ENCODE measurements at regions of chrX and their contacts with region 1.

Region 1: GRCh38 chrX:68196939-68197791 is 236.1 kb downstream of the OPHN1 start:
- DNase-seq: peak; percentile 73
- H3K4me3 Mint-ChIP-seq: no peak overlapping the region
- H3K27ac Mint-ChIP-seq: no peak overlapping the region
- H3K4me1 Mint-ChIP-seq: no peaks in the 10 kb centered on the region
- H3K27me3 Mint-ChIP-seq: peaks cover 22% of the 10 kb centered on the region
- CTCF ChIP-seq: peak; percentile 69

Region 2: DNA sequence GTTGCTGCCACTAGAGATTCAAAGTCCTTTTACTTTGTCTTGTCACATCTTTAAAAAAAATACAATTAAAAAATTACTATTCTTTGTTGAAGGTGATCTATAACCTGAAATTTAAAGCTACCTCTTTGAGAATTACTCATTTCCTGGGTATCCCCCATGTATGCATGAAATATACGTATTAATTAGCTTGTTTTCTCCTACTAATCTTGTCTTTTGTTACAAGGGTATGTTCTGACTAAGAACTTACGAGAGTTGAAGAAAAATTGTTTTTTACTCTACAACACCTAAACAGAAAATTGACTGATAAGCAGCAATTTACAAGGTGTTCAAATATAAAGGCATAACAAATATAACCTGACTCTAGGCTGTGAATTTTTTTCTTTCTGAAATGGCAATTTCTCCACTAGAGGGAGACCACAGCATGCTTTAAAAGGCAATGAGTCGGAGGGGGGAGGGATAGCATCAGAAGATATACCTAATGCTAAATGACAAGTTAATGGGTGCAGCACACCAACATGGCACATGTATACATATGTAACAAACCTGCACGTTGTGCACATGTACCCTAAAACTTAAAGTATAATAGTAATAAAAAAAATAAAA is 13.5 kb before region 1 on chrX:
- CTCF ChIA-PET with region 1: interaction called, 33 read pairs
- POLR2A ChIA-PET with region 1: no interaction called
- intact Hi-C with region 1: no loop called
- DNase-seq: peak; percentile 53
- H3K4me3 Mint-ChIP-seq: no peak overlapping the region
- H3K27ac Mint-ChIP-seq: no peak overlapping the region
- H3K4me1 Mint-ChIP-seq: no peaks in the 10 kb centered on the region
- H3K27me3 Mint-ChIP-seq: peaks cover 22% of the 10 kb centered on the region
- CTCF ChIP-seq: peak; percentile 51

Region 3: DNA sequence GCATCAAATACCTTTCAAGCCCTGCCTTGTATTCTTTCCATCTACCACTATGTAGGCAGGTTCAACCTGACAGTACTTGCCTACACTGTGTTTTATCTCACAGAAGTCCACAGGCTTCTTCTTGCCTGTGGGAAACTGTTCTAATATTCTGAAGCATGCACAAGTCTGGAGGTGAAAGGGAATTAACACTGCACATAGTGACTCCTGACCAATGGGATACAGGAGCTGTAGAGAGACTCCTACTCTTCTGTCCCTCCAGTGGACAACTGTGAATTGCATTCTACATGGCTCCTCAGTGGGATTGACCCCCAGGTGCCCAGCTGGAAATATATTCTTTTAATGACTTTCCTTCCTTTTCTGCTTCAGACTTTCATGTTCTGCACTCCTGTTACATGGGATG is 293.4 kb after region 1 on chrX:
- CTCF ChIA-PET with region 1: interaction called, 19 read pairs
- POLR2A ChIA-PET with region 1: interaction called, 4 read pairs
- intact Hi-C with region 1: loop called (anchors 1 kb)
- DNase-seq: peak; percentile 41
- H3K4me3 Mint-ChIP-seq: no peak overlapping the region
- H3K27ac Mint-ChIP-seq: no peak overlapping the region
- H3K4me1 Mint-ChIP-seq: no peaks in the 10 kb centered on the region
- H3K27me3 Mint-ChIP-seq: peaks cover 28% of the 10 kb centered on the region
- CTCF ChIP-seq: peak; percentile 25

Region 4: DNA sequence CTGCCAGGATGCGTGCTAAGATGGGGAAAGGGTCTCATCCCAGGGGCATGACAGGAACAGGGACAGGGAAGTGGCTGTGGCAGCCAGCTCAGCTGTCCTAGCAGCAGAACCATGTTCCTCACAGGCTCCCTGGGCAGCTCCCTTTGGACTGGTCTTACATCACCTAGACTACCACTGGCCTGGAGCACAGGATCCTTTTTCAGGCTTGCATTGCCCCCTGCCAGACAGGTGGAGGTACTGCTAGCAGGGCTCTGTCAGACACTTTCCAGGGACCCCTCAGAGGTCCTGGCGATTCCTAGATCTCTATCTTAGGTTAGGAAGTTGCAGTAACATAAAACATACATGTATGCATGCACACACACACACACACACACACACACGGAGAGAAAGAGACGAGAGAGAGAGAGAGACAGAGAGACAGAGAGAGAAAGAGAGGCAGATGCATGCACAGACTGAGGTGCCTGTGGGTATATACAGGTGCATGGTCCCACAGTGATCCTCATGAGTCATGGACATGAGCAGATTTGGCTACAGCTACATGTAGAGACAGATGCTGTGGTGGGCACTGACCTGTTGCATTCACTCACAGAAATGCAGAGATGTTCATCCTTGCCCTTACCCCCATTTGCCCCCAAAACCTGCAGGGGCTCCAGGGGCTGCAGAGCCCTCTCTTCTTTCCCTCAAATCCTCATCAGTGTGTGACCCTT is 513.9 kb after region 1 on chrX:
- CTCF ChIA-PET with region 1: interaction called, 20 read pairs
- POLR2A ChIA-PET with region 1: interaction called, 3 read pairs
- intact Hi-C with region 1: loop called (anchors 1 kb)
- DNase-seq: peak; percentile 59
- H3K4me3 Mint-ChIP-seq: no peak overlapping the region
- H3K27ac Mint-ChIP-seq: no peak overlapping the region
- H3K4me1 Mint-ChIP-seq: no peaks in the 10 kb centered on the region
- H3K27me3 Mint-ChIP-seq: peaks cover 55% of the 10 kb centered on the region
- CTCF ChIP-seq: peak; percentile 72

Region 5: DNA sequence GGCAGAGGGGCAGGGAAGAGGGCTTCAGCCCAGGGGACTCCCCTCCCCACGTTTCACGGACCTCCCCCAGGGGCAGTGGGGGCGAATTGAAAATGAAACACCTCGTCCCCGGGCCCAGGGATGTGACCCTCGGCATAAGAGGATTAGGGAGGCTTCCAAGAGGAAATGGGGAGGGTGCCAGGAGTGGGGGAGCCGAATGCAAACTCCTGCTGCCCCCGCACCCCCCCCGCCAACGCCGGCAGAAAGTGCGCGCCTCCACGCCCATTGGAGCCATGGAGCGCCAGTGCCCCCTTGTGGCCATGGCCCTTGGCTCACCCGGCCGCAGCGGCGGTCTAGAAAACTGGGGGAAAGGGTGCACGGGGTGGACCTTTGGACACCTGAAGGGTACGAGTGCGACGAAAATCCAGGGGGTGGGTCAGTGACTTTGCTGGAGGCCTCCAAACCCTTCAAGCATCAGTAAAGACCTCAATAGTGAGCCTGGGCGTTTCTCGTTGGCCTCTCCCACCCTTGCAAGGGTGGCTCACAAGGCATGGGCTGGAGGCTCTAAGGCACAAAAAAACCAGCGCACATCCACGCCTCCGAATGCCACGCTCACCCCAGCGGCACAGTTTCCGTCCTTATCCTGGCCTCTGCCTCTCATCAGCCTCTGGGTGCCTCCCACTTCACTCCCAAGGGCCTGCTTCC is 1088.9 kb after region 1 on chrX:
- CTCF ChIA-PET with region 1: no interaction called
- POLR2A ChIA-PET with region 1: no interaction called
- intact Hi-C with region 1: loop called (anchors 10 kb)
- DNase-seq: peak; percentile 45
- H3K4me3 Mint-ChIP-seq: peak overlapping the region; percentile 60
- H3K27ac Mint-ChIP-seq: no peak overlapping the region
- H3K4me1 Mint-ChIP-seq: peaks cover 5% of the 10 kb centered on the region
- H3K27me3 Mint-ChIP-seq: peaks cover 75% of the 10 kb centered on the region
- CTCF ChIP-seq: peak; percentile 90

Measured in MCF 10A (cell line).